Posterior vena cava (tissue), 2 donors: ENCODE measurements at regions of chr6 and their contacts with region 1.

Region 1: DNA sequence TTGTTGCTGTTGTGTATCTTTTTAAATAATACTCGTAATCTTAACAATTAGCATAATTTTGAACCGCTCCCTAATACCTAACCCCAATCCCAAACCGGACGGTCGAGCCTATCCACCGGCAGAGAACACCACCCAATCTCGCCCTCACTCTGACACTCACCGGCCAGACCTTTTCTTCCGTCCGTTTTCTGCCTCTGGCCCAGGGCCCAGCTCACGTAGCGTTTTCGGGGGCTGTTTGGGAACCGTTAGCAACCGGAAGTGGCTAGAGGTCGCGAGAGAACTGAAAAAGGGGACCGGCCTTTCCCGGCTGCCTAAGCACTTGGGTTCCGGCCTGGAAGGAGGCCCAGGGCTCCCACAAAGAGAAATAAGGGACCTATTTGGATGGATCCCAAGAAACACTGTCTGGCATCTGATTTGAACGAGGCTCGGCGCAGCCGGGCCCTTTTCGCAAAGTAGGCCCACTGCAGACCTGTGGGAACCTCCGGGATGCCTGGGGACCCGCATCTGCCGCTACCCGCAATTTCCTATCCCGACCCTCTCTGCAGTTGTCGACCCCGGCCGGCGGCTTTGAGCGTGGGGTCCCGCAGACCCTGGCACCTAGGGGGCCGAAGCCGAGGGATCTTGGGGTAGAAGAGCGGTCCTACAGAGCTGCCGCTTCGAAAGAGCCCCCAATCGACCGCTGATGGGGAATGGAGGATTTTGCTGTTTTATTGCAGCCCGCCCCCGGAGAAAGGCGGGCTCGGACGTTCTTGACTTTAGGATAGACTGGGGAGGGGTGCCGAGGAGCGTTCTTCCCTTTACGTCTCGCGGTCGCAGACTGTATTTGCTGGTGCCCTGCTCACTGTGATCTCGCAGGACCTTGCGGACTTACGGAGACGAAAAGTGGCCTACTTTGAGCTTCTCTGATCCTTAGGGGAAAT is 4.8 kb upstream of the ZKSCAN8 start:
- DNase-seq: peak; percentile 97

Region 2: GRCh38 chr6:28080631-28081485 is 56.0 kb before region 1 on chr6:
- intact Hi-C with region 1: loop called in 1 of 2 experiments (anchors 10 kb)
- DNase-seq: peak; percentile 97

Region 3: GRCh38 chr6:28225056-28225834 is 88.4 kb after region 1 on chr6 and contains the start of gene ZSCAN9:
- intact Hi-C with region 1: loop called in 1 of 2 experiments (anchors 5 kb)
- DNase-seq: peak; percentile 96
- total RNA-seq, gene ZSCAN9: 9.2 to 10.4 TPM

Region 4: GRCh38 chr6:28355743-28356665 is 219.2 kb after region 1 on chr6:
- intact Hi-C with region 1: loop called (anchors 10 kb)
- DNase-seq: peak; percentile 85

Region 5: DNA sequence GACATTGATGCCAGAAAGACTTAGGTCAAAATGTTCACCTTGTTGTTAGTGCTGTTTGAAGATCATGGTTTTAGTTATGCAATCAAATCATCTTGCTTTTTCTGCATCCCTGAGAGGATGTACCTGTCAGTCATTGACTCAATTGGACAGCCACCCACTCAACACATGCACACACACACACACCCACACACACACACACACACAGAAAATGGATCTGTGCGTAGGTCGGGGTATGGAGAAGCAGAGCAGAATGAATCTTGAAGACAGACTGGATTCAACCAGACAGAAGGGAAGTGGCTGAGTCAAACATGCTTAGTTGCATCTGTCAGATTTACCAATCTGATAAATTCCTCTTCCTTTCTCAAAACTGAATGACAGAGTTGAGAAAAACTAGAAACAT is 325.6 kb after region 1 on chr6:
- intact Hi-C with region 1: no loop called
- DNase-seq: no peak